ENCODE measurements at regions of chr7 and their contacts with region 1.

Region 1: DNA sequence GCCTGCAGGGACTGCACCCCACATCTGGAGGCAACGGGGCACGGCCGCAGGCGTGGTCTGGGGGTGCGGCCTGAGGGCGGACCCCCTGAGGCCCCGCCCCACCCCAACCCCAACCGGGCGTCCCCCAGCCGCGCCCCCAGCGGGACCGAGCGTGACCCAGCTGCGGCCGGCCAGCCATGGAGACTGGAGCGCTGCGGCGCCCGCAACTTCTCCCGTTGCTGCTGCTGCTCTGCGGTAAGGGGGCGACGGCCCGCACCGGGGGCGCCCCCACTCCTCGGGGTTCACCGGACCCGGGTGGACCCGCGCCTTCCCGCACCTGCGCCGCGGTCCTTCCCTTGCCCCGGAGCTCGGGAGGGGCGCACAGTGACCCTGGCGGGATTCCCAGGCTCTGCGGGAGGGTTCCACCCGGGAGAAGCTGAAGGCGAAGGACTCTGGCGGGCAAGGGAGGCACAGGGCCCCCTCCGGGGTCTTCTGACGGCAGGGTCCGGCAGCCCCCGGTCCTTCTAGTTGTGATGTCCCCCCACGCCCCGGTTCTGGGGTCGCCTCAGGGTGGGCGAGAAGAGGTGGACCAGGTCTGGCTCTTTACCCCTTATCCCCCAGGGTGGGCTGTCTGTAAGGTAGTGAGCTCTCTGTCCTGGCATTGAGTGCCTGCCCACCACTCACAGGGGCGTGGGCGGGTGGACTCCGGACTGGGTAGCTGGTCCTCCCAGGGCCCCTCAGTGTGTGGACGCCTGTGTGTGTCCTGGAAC is at the start of gene RAMP3:
- DNase-seq: no peak
- H3K4me3 Mint-ChIP-seq: no peak within 1 kb of the TSS
- H3K27ac Mint-ChIP-seq: no peak within 1 kb of the TSS
- H3K4me1 Mint-ChIP-seq: peaks cover 3% of the 10 kb centered on the region
- H3K27me3 Mint-ChIP-seq: peaks cover 18% of the 10 kb centered on the region
- total RNA-seq, gene RAMP3: not detected

Region 2: GRCh38 chr7:45259966-45260646 is 102.3 kb after region 1 on chr7:
- CTCF ChIA-PET with region 1: interaction called, 96 read pairs
- intact Hi-C with region 1: loop called (anchors 1 kb)
- DNase-seq: peak; percentile 75
- H3K4me3 Mint-ChIP-seq: no peak overlapping the region
- H3K27ac Mint-ChIP-seq: no peak overlapping the region
- H3K4me1 Mint-ChIP-seq: no peaks in the 10 kb centered on the region
- H3K27me3 Mint-ChIP-seq: peaks cover 10% of the 10 kb centered on the region